ENCODE measurements at regions of chr17 and their contacts with region 1.

Region 1: GRCh38 chr17:8383143-8383822 is at the start of gene RPL26:
- DNase-seq: peak; percentile 98 to 99
- H3K4me3 ChIP-seq: peak within 1 kb of the TSS; percentile 70 to 97
- H3K27ac ChIP-seq: peak within 1 kb of the TSS; percentile 77 to 79
- H3K4me1 ChIP-seq: peaks cover 0 to 39% (median 33%) of the 10 kb centered on the region in 4 donors
- H3K27me3 ChIP-seq: no peaks in the 10 kb centered on the region
- CTCF ChIP-seq: peak; percentile 99

Region 2: DNA sequence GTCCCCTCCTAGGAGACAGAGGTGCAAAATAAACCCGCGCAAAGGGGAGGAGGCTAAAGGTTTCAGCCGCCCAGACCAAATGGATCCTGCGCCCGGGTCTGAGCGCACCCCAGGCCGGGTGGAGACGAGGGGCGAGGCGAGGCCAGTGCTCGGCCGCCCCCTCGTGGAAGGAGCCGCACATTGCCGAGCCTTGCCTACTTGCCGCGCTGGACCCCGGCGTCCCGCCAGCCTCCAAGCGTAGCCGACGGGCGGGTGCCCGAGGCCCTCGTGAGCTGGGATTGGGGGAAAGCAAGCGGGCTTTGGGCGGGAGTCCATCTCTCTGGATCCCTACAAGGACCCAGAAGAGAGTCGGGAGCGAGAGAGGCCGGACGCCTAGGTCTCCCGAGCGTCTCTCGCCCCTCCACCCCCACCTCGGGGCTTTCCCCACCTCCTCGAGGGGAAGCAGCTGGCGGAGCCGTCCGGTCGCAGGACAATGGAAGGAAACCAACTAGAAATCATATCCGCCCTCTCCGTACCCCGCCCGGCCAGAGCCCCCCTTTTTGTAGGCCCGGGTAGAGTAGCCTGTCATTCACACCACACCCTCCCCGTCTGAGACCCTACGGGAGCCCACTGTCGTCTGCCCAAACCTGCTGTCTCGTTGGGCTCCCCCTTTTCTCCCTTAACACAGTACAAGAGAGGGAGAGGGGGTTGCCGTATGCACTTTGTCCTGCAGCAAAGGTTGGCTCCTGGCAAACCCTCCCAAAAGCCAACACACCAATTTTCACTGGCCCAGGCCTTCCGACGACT is 1361.1 kb before region 1 on chr17:
- intact Hi-C with region 1: loop called (anchors 5 kb)
- DNase-seq: peak; percentile 76 to 86
- H3K4me3 ChIP-seq: peak overlapping the region; percentile 29 to 34
- H3K27ac ChIP-seq: peak overlapping the region; percentile 41 to 56
- H3K4me1 ChIP-seq: peaks cover 5 to 42% (median 39%) of the 10 kb centered on the region in 4 donors
- H3K27me3 ChIP-seq: peaks cover 0 to 34% of the 10 kb centered on the region in 2 donors
- CTCF ChIP-seq: peak; percentile 94 to 96

Region 3: DNA sequence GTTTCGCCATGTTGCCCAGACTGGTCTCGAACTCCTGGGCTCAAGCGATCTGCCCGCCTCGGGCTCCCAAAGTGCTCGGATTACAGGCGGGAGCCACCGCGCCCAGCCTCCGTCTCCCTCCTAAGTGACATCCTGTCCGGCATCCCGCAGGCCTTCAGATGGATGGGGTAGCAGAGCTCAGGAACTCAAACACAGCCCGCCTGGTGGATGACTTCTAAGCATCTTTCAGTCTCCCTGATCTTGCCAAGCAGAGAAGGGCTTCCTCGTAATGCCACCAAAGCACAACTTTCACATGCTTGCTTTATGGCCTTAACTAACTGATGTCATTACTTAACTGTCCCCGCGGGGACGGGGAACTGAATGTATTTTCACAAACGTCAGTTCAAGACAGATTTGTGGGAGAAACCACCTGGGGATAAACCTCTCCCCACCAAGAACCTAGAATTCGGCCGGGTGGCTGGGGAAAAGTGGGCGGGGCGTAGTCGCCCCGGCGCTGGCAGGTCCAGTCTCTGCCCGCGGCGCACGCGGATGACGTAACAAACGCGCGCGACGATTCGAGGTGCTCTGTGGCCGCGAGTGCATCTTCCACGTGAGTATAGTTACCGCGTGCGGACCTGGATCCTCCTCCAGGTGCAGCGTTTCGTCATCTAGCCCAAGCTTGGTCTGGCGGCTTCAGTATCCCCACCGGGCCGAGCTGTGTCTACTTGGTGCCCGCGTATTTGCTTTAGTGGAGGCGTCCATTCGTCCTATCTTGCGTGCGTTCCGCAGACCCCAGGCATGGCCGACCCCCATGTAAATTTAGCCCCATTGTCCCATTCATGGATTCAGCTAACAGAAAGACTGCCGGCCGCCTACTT is 134.3 kb before region 1 on chr17 and contains the start of gene PFAS:
- intact Hi-C with region 1: loop called (anchors 2 kb)
- DNase-seq: peak; percentile 93 to 96
- H3K4me3 ChIP-seq: peak within 1 kb of the TSS; percentile 62 to 86
- H3K27ac ChIP-seq: peak within 1 kb of the TSS; percentile 95 to 96
- H3K4me1 ChIP-seq: peaks cover 0 to 18% (median 10%) of the 10 kb centered on the region in 4 donors
- H3K27me3 ChIP-seq: no peaks in the 10 kb centered on the region
- CTCF ChIP-seq: peak in 1 of 2 experiments; percentile 9

Region 4: GRCh38 chr17:8455665-8456209 is 72.5 kb after region 1 on chr17:
- intact Hi-C with region 1: no loop called
- DNase-seq: no peak
- H3K4me3 ChIP-seq: no peak overlapping the region
- H3K27ac ChIP-seq: no peak overlapping the region
- H3K4me1 ChIP-seq: no peaks in the 10 kb centered on the region
- H3K27me3 ChIP-seq: no peaks in the 10 kb centered on the region
- CTCF ChIP-seq: no peak

Region 5: GRCh38 chr17:8470447-8471047 is 87.3 kb after region 1 on chr17:
- intact Hi-C with region 1: no loop called
- DNase-seq: peak in 1 of 2 donors; percentile 83
- H3K4me3 ChIP-seq: no peak overlapping the region
- H3K27ac ChIP-seq: peak overlapping the region; percentile 61 to 82
- H3K4me1 ChIP-seq: peaks cover 0 to 83% (median 44%) of the 10 kb centered on the region in 4 donors
- H3K27me3 ChIP-seq: no peaks in the 10 kb centered on the region
- CTCF ChIP-seq: no peak

Measured in tibial artery (tissue), 4 donors.